ENCODE measurements at regions of chr3 and their contacts with region 1.

Region 1: DNA sequence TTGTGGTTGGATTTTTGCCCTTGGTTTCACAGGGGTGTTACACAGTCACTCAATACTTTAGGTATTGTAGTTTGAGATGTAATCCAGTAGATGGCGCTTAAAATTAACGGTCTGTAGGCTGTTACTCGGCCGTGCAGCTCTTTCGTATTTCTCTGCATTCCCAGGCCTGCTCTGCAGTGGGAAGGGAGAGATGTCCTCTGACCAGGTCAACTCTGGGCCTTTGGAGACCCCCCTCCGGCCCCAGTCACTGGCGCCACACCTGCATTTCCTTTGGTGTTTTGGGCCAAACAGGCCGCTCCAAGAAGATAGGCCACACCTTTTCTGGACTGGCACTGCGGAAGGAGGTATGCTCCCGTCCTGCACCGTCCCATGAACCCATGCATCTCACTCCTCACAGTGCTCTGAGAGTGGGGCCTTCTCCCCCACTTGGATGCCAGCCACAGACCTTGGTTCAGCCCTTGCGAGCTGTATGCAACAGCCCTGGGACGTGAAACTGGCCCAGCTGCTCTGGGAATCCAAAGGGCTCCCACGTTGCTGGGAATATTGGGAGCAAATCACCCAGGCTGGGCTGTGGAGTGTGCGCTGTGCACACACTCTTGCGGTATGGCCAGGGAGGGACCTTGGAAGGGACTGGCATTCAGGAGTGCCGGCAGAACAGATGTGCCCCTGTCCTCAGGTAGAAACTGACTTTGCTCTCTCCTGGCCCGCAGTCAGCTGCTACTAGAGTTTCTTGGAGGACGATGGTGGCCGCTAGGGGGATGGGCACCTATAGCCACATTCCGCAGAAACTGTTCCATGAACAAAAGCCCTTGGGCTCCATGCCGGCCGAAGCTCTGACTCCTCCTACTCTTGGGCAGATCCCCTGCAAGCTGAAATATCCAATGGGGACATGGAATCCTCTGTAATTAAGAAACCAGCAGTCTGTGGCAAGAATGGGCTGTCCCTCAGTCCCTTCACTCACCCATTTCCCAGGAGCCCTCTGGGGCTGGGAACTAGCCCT is 410.5 kb upstream of the CADM2 start:
- DNase-seq: peak; percentile 7
- ATAC-seq: peak; percentile 36
- H3K4me3 Mint-ChIP-seq: no peak overlapping the region
- H3K27ac Mint-ChIP-seq: no peak overlapping the region
- H3K4me1 Mint-ChIP-seq: no peaks in the 10 kb centered on the region
- H3K27me3 Mint-ChIP-seq: no peaks in the 10 kb centered on the region

Region 2: GRCh38 chr3:85360742-85361387 is 812.6 kb after region 1 on chr3:
- CTCF ChIA-PET with region 1: no interaction called
- POLR2A ChIA-PET with region 1: no interaction called
- intact Hi-C with region 1: loop called in 1 of 2 experiments (anchors 5 kb)
- DNase-seq: peak; percentile 38
- ATAC-seq: peak; percentile 30
- H3K4me3 Mint-ChIP-seq: no peak overlapping the region
- H3K27ac Mint-ChIP-seq: no peak overlapping the region
- H3K4me1 Mint-ChIP-seq: no peaks in the 10 kb centered on the region
- H3K27me3 Mint-ChIP-seq: no peaks in the 10 kb centered on the region

Region 3: GRCh38 chr3:85576091-85576690 is 1027.9 kb after region 1 on chr3:
- CTCF ChIA-PET with region 1: interaction called, 7 read pairs
- POLR2A ChIA-PET with region 1: no interaction called
- intact Hi-C with region 1: loop called (anchors 1 to 5 kb)
- DNase-seq: peak; percentile 71
- ATAC-seq: no peak
- H3K4me3 Mint-ChIP-seq: no peak overlapping the region
- H3K27ac Mint-ChIP-seq: no peak overlapping the region
- H3K4me1 Mint-ChIP-seq: no peaks in the 10 kb centered on the region
- H3K27me3 Mint-ChIP-seq: no peaks in the 10 kb centered on the region